GM10248 (cell line): ENCODE measurements at regions of chr3 and their contacts with region 1.

Region 1: GRCh38 chr3:27253831-27254230 is 115.4 kb downstream of the NEK10 start:
- DNase-seq: peak; percentile 15
- CTCF ChIP-seq: peak; percentile 40

Region 2: GRCh38 chr3:27275441-27275990 is 21.7 kb after region 1 on chr3:
- CTCF ChIA-PET with region 1: interaction called, 14 read pairs
- POLR2A ChIA-PET with region 1: no interaction called
- DNase-seq: no peak
- CTCF ChIP-seq: no peak

Region 3: GRCh38 chr3:27454914-27455313 is 201.1 kb after region 1 on chr3:
- CTCF ChIA-PET with region 1: no interaction called
- POLR2A ChIA-PET with region 1: no interaction called
- DNase-seq: peak; percentile 24
- CTCF ChIP-seq: no peak